ENCODE measurements at regions of chr20 and their contacts with region 1.

Region 1: GRCh38 chr20:3786665-3787323 is at the start of gene CENPB:
- DNase-seq: peak; percentile 82 to 94 (median 88)
- H3K4me3 ChIP-seq: peak within 1 kb of the TSS; percentile 29 to 38
- H3K4me3 Mint-ChIP-seq: peak within 1 kb of the TSS; percentile 74 to 87 (median 84)
- H3K27ac ChIP-seq: peak within 1 kb of the TSS; percentile 12
- H3K27ac Mint-ChIP-seq: peak within 1 kb of the TSS; percentile 79 to 93 (median 88)
- H3K4me1 ChIP-seq: peaks cover 37% of the 10 kb centered on the region
- H3K4me1 Mint-ChIP-seq: peaks cover 23 to 41% (median 33%) of the 10 kb centered on the region in 4 donors
- H3K27me3 ChIP-seq: no peaks in the 10 kb centered on the region
- H3K27me3 Mint-ChIP-seq: no peaks in the 10 kb centered on the region
- total RNA-seq, gene CENPB: 52.2 to 56.7 TPM

Region 2: GRCh38 chr20:3846740-3847428 is 60.1 kb after region 1 on chr20 and contains the start of gene MAVS:
- CTCF ChIA-PET with region 1: interaction called, 5 read pairs
- POLR2A ChIA-PET with region 1: interaction called, 10 read pairs
- intact Hi-C with region 1: loop called (anchors 2 kb)
- DNase-seq: peak; percentile 81 to 84 (median 81)
- H3K4me3 ChIP-seq: peak within 1 kb of the TSS; percentile 45 to 92
- H3K4me3 Mint-ChIP-seq: peak within 1 kb of the TSS; percentile 79 to 93 (median 92)
- H3K27ac ChIP-seq: peak within 1 kb of the TSS; percentile 85
- H3K27ac Mint-ChIP-seq: peak within 1 kb of the TSS; percentile 78 to 97 (median 93)
- H3K4me1 ChIP-seq: peaks cover 27% of the 10 kb centered on the region
- H3K4me1 Mint-ChIP-seq: peaks cover 20 to 38% (median 25%) of the 10 kb centered on the region in 4 donors
- H3K27me3 ChIP-seq: no peaks in the 10 kb centered on the region
- H3K27me3 Mint-ChIP-seq: no peaks in the 10 kb centered on the region
- total RNA-seq, gene MAVS: 45.2 to 49.3 TPM

Region 3: GRCh38 chr20:3901028-3901705 is 114.4 kb after region 1 on chr20:
- CTCF ChIA-PET with region 1: no interaction called
- POLR2A ChIA-PET with region 1: no interaction called
- intact Hi-C with region 1: no loop called
- DNase-seq: no peak
- H3K4me3 ChIP-seq: no peak overlapping the region
- H3K4me3 Mint-ChIP-seq: peak overlapping the region; percentile 1 to 83 (median 51)
- H3K27ac ChIP-seq: peak overlapping the region; percentile 20
- H3K27ac Mint-ChIP-seq: peak overlapping the region; percentile 32 to 84 (median 51)
- H3K4me1 ChIP-seq: peaks cover 91% of the 10 kb centered on the region
- H3K4me1 Mint-ChIP-seq: peaks cover 44 to 92% (median 69%) of the 10 kb centered on the region in 4 donors
- H3K27me3 ChIP-seq: no peaks in the 10 kb centered on the region
- H3K27me3 Mint-ChIP-seq: no peaks in the 10 kb centered on the region

Measured in CD4-positive, alpha-beta memory T cell (primary cell).